Right cardiac atrium (tissue), 5 donors: ENCODE measurements at regions of chr17 and their contacts with region 1.

Region 1: DNA sequence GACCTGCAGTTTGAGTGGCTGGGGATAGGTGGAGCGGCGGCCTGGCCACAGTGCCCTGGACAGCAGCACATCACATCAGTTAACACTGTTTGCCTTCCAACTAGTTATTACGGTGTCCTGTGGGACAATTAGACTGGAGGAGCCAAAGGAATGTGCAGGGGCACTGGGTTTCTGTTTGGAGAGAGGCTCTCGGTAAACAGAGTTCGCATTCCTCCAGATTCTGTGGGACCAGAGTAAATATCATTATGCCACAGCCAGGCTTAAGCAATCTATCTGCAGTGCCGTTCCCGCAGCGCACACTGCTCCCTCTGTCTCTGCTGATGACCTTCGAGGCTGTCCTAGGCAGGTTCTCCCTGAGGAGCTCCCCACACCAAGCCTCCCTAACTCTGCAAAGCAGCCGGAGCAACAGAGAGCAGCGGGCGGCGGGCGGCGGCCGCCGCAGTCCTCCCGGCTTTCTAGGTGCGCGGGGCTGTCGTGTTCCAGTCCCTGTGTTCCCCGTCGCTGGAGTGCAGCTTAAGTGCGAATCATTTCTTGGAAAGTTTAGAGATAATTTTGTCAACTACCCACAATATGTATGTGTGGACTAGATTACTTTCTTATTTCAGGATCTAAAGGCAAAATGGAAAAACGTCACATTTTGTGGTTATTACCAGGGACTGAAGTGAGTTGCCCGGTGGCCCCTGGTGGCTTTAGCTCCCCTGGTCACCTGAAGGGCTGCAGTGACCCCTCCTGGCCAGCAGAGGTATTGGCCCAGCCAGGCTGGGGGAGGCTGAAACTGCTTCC is 43.2 kb downstream of the PGS1 start:
- DNase-seq: peak; percentile 72 to 91 (median 90)
- ATAC-seq: peak; percentile 67 to 68
- H3K4me3 ChIP-seq: no peak overlapping the region
- H3K27ac ChIP-seq: peak overlapping the region; percentile 10
- H3K4me1 ChIP-seq: peaks cover 11% of the 10 kb centered on the region
- H3K27me3 ChIP-seq: no peaks in the 10 kb centered on the region

Region 2: GRCh38 chr17:78250891-78251794 is 170.5 kb before region 1 on chr17:
- intact Hi-C with region 1: loop called in 3 of 4 experiments (anchors 2 to 10 kb)
- DNase-seq: peak; percentile 85 to 94 (median 93)
- ATAC-seq: peak; percentile 74 to 80
- H3K4me3 ChIP-seq: no peak overlapping the region
- H3K27ac ChIP-seq: no peak overlapping the region
- H3K4me1 ChIP-seq: peaks cover under 1% of the 10 kb centered on the region
- H3K27me3 ChIP-seq: no peaks in the 10 kb centered on the region

Region 3: GRCh38 chr17:78289802-78290363 is 131.8 kb before region 1 on chr17:
- intact Hi-C with region 1: loop called in 3 of 4 experiments (anchors 2 to 5 kb)
- DNase-seq: peak; percentile 83 to 91 (median 88)
- ATAC-seq: peak; percentile 93 to 95
- H3K4me3 ChIP-seq: no peak overlapping the region
- H3K27ac ChIP-seq: no peak overlapping the region
- H3K4me1 ChIP-seq: no peaks in the 10 kb centered on the region
- H3K27me3 ChIP-seq: no peaks in the 10 kb centered on the region

Region 4: DNA sequence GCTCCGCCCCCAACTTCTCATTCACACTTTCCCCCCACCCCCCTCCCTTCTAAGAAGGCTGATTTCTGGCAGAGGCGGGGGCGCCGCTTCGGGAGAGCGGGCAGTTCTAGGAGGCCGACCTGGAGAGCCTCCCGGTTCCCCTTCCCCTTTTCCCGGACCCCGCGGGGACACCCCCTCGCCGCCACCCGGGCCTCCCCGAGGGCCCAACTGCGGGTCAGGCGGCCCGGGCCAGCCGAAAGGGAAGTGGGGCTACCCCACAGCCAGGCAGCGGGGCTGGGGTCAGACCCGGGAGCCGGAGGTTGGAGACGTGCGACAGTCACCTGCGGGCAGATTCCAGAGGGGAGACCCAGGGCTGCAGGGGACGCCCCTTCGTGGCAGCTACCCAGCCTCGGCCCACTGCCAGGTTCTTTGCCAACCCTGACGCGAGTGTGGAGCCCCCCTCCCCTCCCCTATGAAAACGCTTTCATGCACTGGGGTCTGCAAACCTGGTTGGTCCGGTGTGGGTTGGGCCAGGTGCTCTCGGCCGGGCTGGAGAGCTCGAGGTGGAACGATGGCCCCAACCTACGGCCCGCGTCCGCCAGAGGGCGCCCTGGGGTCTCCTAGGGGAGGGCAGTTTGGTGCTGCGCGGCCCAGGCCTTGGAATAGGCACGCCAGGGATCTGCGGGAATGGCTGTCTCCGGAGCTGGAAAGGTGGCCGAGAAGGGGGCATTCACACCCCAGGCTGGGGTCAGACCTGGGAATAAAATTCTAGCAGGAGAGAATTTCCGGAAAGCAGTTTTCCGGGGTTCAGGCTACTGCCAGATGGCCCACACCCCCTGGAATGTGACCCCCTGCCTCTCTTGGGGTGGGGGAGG is 61.1 kb before region 1 on chr17:
- intact Hi-C with region 1: loop called (anchors 2 to 5 kb)
- DNase-seq: peak; percentile 93 to 98 (median 98)
- ATAC-seq: peak; percentile 75 to 79
- H3K4me3 ChIP-seq: peak overlapping the region; percentile 64
- H3K27ac ChIP-seq: peak overlapping the region; percentile 25
- H3K4me1 ChIP-seq: peaks cover 9% of the 10 kb centered on the region
- H3K27me3 ChIP-seq: no peaks in the 10 kb centered on the region

Region 5: GRCh38 chr17:78383725-78384471 is 37.8 kb before region 1 on chr17:
- intact Hi-C with region 1: loop called in 1 of 4 experiments (anchors 5 kb)
- DNase-seq: peak; percentile 85 to 90 (median 89)
- ATAC-seq: peak; percentile 84 to 90
- H3K4me3 ChIP-seq: no peak overlapping the region
- H3K27ac ChIP-seq: peak overlapping the region; percentile 76
- H3K4me1 ChIP-seq: peaks cover 11% of the 10 kb centered on the region
- H3K27me3 ChIP-seq: no peaks in the 10 kb centered on the region

Region 6: DNA sequence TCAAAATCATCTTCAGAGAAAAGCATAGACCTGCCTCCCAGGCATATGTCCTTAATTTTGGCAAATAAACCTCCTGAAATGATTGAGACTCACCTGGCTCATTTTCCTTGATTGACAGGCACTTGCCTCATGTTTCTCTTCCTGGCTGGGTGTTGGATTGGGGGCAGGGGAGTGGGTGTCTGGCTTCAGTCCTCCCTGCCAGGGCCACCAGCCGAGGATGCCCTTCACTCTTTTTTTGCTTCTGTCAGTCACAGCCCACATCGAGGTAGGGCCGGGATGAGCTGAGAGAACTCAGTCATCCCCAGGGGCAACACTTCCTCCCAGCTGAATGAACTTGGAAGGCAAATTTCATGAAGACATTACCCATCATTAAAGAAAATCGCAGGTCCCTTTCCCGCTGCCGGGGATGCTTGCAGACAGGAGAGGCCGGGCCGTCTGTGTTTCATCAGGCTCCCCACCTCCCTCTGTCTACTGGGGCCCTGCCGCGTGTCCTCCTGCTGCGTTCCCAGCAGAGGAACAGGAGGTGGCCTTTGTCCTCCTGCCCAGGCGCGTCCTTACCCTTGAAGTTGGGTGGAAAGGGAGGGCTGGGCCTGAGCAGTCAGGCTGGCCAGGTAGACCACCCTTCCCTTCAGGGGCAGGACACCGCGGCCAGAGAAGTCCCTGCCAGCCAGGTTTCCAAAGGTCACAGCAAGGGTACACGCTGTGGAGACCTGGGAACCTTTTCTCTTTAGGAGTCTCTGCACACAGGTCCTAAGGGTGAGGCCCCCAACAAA is 166.8 kb after region 1 on chr17:
- intact Hi-C with region 1: no loop called
- DNase-seq: no peak
- ATAC-seq: no peak
- H3K4me3 ChIP-seq: no peak overlapping the region
- H3K27ac ChIP-seq: no peak overlapping the region
- H3K4me1 ChIP-seq: no peaks in the 10 kb centered on the region
- H3K27me3 ChIP-seq: no peaks in the 10 kb centered on the region

Region 7: GRCh38 chr17:78624324-78625151 is 202.9 kb after region 1 on chr17:
- intact Hi-C with region 1: no loop called
- DNase-seq: peak in 1 of 3 donors; percentile 7
- ATAC-seq: peak in 1 of 2 donors; percentile 22
- H3K4me3 ChIP-seq: no peak overlapping the region
- H3K27ac ChIP-seq: no peak overlapping the region
- H3K4me1 ChIP-seq: no peaks in the 10 kb centered on the region
- H3K27me3 ChIP-seq: no peaks in the 10 kb centered on the region